ENCODE measurements at regions of chr1 and their contacts with region 1.

Region 1: DNA sequence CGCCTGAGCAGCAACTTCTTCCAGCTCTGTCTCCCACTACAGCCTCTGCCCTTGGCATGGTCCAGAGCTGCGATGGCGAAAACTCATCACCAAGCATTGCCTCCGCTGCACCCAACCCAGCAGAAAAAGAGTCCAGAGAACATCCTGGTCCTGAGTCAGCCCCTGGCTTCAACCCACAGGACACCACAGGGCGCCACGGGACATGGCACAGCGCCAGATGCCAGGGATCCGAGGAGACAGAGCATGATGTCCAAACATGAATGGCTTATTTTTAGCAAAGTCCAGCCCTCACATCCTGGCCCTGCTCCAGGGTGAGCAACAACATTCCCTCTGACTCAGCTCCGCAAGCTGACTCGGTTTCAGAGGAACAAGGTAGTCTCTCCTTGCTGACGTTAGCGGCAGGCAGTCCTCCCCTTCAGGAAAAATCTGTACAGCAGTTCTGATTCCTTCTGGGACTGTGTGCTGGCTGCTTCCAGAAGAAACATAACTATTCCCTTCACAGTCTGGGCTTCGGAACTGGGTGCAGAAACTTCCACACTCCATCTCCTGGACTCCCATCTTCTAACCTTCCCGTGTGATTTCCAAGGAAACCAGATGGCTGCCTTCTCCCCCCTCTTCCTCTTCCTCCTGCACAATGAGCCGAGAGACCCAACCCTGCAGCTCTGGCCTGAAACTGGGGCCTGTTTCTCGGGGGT is 131.3 kb downstream of the TOMM20 start:
- DNase-seq: peak; percentile 31
- H3K4me3 ChIP-seq: peak overlapping the region in 1 of 4 donors; percentile 26
- H3K27ac ChIP-seq: peak overlapping the region; percentile 91 to 96 (median 95)
- H3K4me1 ChIP-seq: peaks cover 18 to 32% (median 26%) of the 10 kb centered on the region in 3 donors
- H3K27me3 ChIP-seq: no peaks in the 10 kb centered on the region
- CTCF ChIP-seq: no peak
- POLR2A ChIP-seq: peak in 3 of 4 donors; percentile 19 to 53 (median 42)

Region 2: GRCh38 chr1:234610348-234611152 is 386.8 kb before region 1 on chr1:
- intact Hi-C with region 1: loop called (anchors 10 kb)
- DNase-seq: peak; percentile 68
- H3K4me3 ChIP-seq: peak overlapping the region; percentile 50 to 90 (median 66)
- H3K27ac ChIP-seq: peak overlapping the region; percentile 99 to 100 (median 100)
- H3K4me1 ChIP-seq: peaks cover 30 to 63% (median 34%) of the 10 kb centered on the region in 3 donors
- H3K27me3 ChIP-seq: no peaks in the 10 kb centered on the region
- CTCF ChIP-seq: peak in 3 of 6 experiments; percentile 6 to 30 (median 28)
- POLR2A ChIP-seq: peak in 3 of 4 donors; percentile 98 to 99 (median 98)

Region 3: GRCh38 chr1:234933475-234933874 is 63.9 kb before region 1 on chr1:
- intact Hi-C with region 1: no loop called
- DNase-seq: no peak
- H3K4me3 ChIP-seq: no peak overlapping the region
- H3K27ac ChIP-seq: peak overlapping the region in 2 of 4 donors; percentile 18 to 56
- H3K4me1 ChIP-seq: peaks cover 0 to 9% (median 9%) of the 10 kb centered on the region in 3 donors
- H3K27me3 ChIP-seq: no peaks in the 10 kb centered on the region
- CTCF ChIP-seq: no peak
- POLR2A ChIP-seq: no peak

Region 4: GRCh38 chr1:235075188-235075926 is 78.0 kb after region 1 on chr1:
- intact Hi-C with region 1: loop called (anchors 10 kb)
- DNase-seq: no peak
- H3K4me3 ChIP-seq: peak overlapping the region in 1 of 4 donors; percentile 42
- H3K27ac ChIP-seq: peak overlapping the region; percentile 88 to 94 (median 92)
- H3K4me1 ChIP-seq: peaks cover 48 to 85% (median 57%) of the 10 kb centered on the region in 3 donors
- H3K27me3 ChIP-seq: no peaks in the 10 kb centered on the region
- CTCF ChIP-seq: no peak
- POLR2A ChIP-seq: no peak

Measured in esophagus squamous epithelium (tissue), 5 donors.